CD8-positive, alpha-beta T cell (primary cell): ENCODE measurements at regions of chr2 and their contacts with region 1.

Region 1: GRCh38 chr2:98649135-98649991 is 41.0 kb downstream of the UNC50 start:
- DNase-seq: peak; percentile 73 to 92 (median 83)
- ATAC-seq: peak; percentile 92
- H3K4me3 ChIP-seq: no peak overlapping the region
- H3K4me3 Mint-ChIP-seq: peak overlapping the region; percentile 37
- H3K27ac ChIP-seq: peak overlapping the region in 1 of 2 experiments; percentile 47
- H3K27ac Mint-ChIP-seq: peak overlapping the region; percentile 99
- H3K4me1 ChIP-seq: peaks cover 52% of the 10 kb centered on the region
- H3K4me1 Mint-ChIP-seq: peaks cover 63% of the 10 kb centered on the region
- H3K27me3 ChIP-seq: no peaks in the 10 kb centered on the region
- H3K27me3 Mint-ChIP-seq: no peaks in the 10 kb centered on the region
- CTCF ChIP-seq: peak; percentile 98

Region 2: DNA sequence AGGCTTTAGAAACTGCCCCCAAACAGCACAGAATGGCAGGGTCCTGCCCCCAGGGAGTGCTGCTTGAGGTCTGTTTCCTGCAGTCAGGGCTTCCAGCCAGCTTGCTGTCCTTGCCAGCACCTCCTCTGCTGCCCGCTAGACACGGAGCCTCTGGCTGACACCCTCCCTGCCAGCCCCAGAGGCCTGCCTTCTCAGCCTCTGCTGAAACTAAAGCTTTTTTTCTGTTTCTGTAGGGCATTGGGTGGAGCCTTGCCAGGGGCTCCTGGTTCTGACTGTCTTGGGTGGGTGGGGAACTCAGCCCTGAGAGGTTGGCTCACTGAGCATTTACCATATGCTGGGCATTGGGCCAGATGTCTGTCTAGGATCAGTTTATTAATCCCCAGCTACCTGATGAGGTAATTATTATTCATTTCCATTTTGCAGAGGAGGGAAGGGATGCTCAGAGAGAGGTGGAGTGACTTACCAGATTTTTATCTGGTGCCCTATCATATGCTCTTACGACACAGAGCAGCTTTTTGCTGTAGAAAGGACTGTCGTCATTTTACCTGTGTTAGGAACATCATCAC is 169.3 kb before region 1 on chr2:
- CTCF ChIA-PET with region 1: no interaction called
- POLR2A ChIA-PET with region 1: no interaction called
- intact Hi-C with region 1: no loop called
- DNase-seq: peak in 4 of 9 experiments; percentile 55 to 63 (median 58)
- ATAC-seq: peak; percentile 72
- H3K4me3 ChIP-seq: no peak overlapping the region
- H3K4me3 Mint-ChIP-seq: peak overlapping the region; percentile 53
- H3K27ac ChIP-seq: peak overlapping the region; percentile 29 to 68
- H3K27ac Mint-ChIP-seq: peak overlapping the region; percentile 89
- H3K4me1 ChIP-seq: peaks cover 99% of the 10 kb centered on the region
- H3K4me1 Mint-ChIP-seq: peaks cover 98% of the 10 kb centered on the region
- H3K27me3 ChIP-seq: no peaks in the 10 kb centered on the region
- H3K27me3 Mint-ChIP-seq: no peaks in the 10 kb centered on the region
- CTCF ChIP-seq: no peak

Region 3: DNA sequence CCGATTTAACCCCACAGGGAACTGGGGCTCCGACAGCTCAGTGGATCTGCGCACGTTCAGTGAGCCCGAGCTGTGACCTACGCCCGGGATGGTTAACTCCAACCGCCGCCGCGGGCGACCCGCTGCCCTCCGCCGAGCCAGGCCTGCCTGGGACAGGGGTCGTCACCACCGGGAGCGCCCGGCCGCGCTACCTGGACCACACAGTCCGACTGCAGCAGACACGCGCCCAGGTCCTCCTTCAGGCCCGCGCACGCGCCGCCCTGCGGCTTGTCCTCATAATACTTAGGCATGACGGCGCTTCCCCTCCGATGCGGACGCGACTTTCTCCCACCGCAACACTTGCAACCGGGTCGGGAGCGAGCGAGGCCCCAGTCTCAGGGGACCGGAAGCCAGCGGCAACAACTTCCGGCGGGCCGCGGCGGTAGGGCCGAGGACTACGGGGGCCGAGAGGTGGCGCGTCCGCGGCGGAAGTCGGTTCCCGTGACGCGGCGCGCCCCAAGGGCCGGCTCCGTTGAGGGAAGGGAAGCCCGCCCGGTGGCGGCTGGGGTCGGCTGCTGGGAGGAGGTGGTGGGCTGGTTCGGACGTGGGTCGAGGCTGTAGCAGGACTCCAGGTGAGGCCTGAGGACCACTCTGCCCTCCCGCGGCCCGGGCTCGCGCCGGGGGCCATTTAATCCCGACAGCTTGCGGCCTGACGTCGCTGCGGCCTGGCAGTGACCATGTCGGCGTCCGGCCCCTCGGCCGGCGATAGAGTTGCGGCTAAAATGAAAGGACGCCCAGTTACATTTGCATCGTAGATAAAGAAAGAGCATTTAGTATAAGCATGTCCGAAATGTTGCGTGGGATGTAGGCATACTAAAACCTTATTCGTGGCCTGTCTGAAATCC is 41.0 kb before region 1 on chr2 and contains the starts of genes COA5 and UNC50:
- CTCF ChIA-PET with region 1: no interaction called
- POLR2A ChIA-PET with region 1: no interaction called
- intact Hi-C with region 1: no loop called
- DNase-seq: peak; percentile 84 to 95 (median 89)
- ATAC-seq: peak; percentile 81
- H3K4me3 ChIP-seq: peak within 1 kb of the TSS; percentile 84 to 94
- H3K4me3 Mint-ChIP-seq: peak within 1 kb of the TSS; percentile 89
- H3K27ac ChIP-seq: peak within 1 kb of the TSS; percentile 87 to 95
- H3K27ac Mint-ChIP-seq: peak within 1 kb of the TSS; percentile 95
- H3K4me1 ChIP-seq: peaks cover 48% of the 10 kb centered on the region
- H3K4me1 Mint-ChIP-seq: peaks cover 74% of the 10 kb centered on the region
- H3K27me3 ChIP-seq: no peaks in the 10 kb centered on the region
- H3K27me3 Mint-ChIP-seq: no peaks in the 10 kb centered on the region
- CTCF ChIP-seq: no peak
- total RNA-seq, gene COA5: 19.7 to 24.1 TPM
- total RNA-seq, gene UNC50: 12.5 to 14.4 TPM

Region 4: DNA sequence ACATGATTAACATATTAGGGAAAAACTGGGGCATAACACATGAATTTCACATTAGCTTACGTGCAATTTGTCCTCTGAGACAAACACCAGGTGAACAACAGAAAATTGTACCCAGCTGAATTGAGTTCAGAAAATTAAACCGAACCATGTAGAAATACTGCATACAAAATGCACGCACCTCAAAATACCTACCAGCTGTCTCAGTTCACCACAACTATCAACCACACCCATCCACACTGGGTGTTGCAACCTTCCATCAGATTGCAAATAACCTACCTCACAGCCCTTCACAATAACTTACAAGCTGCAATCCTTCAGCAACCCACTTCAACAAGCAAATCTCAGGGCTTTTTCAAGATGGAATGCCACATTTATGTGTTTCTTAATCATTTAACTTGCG is 15.0 kb after region 1 on chr2:
- CTCF ChIA-PET with region 1: interaction called, 20 read pairs
- POLR2A ChIA-PET with region 1: interaction called, 8 read pairs
- intact Hi-C with region 1: loop called in 1 of 2 experiments (anchors 2 kb)
- DNase-seq: peak; percentile 19 to 86 (median 60)
- ATAC-seq: peak; percentile 68
- H3K4me3 ChIP-seq: peak overlapping the region; percentile 19 to 55
- H3K4me3 Mint-ChIP-seq: peak overlapping the region; percentile 64
- H3K27ac ChIP-seq: peak overlapping the region; percentile 54 to 80
- H3K27ac Mint-ChIP-seq: peak overlapping the region; percentile 95
- H3K4me1 ChIP-seq: peaks cover 64% of the 10 kb centered on the region
- H3K4me1 Mint-ChIP-seq: peaks cover 72% of the 10 kb centered on the region
- H3K27me3 ChIP-seq: no peaks in the 10 kb centered on the region
- H3K27me3 Mint-ChIP-seq: no peaks in the 10 kb centered on the region
- CTCF ChIP-seq: no peak

Region 5: GRCh38 chr2:98702127-98702802 is 52.9 kb after region 1 on chr2:
- CTCF ChIA-PET with region 1: interaction called, 10 read pairs
- POLR2A ChIA-PET with region 1: no interaction called
- intact Hi-C with region 1: loop called in 1 of 2 experiments (anchors 2 kb)
- DNase-seq: no peak
- ATAC-seq: peak; percentile 39
- H3K4me3 ChIP-seq: no peak overlapping the region
- H3K4me3 Mint-ChIP-seq: peak overlapping the region; percentile 64
- H3K27ac ChIP-seq: peak overlapping the region; percentile 11 to 30
- H3K27ac Mint-ChIP-seq: peak overlapping the region; percentile 92
- H3K4me1 ChIP-seq: peaks cover 74% of the 10 kb centered on the region
- H3K4me1 Mint-ChIP-seq: peaks cover 79% of the 10 kb centered on the region
- H3K27me3 ChIP-seq: no peaks in the 10 kb centered on the region
- H3K27me3 Mint-ChIP-seq: no peaks in the 10 kb centered on the region
- CTCF ChIP-seq: no peak

Region 6: GRCh38 chr2:98771721-98772524 is 122.6 kb after region 1 on chr2:
- CTCF ChIA-PET with region 1: interaction called, 12 read pairs
- POLR2A ChIA-PET with region 1: interaction called, 26 read pairs
- intact Hi-C with region 1: loop called (anchors 2 kb)
- DNase-seq: peak; percentile 36 to 93 (median 68)
- ATAC-seq: peak; percentile 68
- H3K4me3 ChIP-seq: peak overlapping the region; percentile 39 to 50
- H3K4me3 Mint-ChIP-seq: peak overlapping the region; percentile 87
- H3K27ac ChIP-seq: peak overlapping the region; percentile 79 to 89
- H3K27ac Mint-ChIP-seq: peak overlapping the region; percentile 98
- H3K4me1 ChIP-seq: peaks cover 67% of the 10 kb centered on the region
- H3K4me1 Mint-ChIP-seq: peaks cover 77% of the 10 kb centered on the region
- H3K27me3 ChIP-seq: no peaks in the 10 kb centered on the region
- H3K27me3 Mint-ChIP-seq: no peaks in the 10 kb centered on the region
- CTCF ChIP-seq: no peak

Region 7: DNA sequence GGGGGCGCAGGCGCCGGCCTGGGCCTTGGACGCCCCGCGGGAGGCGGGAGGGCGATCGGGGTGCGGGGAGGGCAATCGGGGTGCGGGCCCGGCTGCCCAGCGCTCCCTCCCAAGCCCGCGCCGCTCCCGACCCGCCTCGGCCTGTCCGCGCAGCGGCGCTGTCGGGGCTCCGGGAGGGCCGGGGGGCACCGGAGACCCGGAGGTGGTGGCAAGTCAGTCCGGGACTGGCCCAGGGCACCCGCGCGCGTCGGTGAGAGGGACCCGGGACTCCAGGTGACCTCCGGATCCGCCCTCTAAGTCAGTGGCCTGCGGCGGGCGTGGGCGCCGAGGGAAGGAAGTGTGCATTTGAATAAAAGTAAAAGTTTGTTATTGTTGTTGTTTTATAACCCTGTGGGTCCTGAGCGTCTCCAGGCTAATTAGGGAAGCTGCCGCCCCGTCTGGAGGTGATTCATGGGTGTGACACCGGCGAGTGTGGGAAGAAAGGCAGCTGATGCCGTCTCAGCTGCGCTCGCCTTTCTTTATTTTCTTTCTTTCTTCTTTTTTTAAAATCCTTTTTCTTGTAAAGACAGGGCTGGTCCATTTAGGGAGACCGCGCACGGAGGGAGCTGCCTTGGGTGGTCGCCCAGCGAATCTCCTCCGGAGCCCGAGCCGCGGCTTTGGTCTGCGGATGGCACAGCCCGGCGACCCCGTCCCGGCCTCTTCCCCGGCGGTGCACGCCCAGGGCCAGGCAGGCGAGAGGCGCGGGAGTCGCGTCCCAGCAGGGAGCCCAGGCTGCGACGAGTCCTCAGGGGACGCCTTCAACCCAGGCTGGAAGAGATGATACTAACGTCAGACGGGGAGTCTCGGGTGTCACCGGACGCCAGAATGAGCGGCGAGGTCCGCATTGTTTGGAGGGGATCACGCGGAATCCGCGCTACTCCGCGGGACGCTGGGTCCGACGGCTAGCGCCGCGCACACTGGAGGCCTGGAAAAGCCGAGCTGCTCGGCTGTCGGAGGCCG is 287.3 kb after region 1 on chr2:
- CTCF ChIA-PET with region 1: no interaction called
- POLR2A ChIA-PET with region 1: no interaction called
- intact Hi-C with region 1: loop called in 1 of 2 experiments (anchors 10 kb)
- DNase-seq: peak in 1 of 9 experiments; percentile 22
- ATAC-seq: peak; percentile 38
- H3K4me3 ChIP-seq: peak overlapping the region; percentile 12 to 34
- H3K4me3 Mint-ChIP-seq: peak overlapping the region; percentile 81
- H3K27ac ChIP-seq: no peak overlapping the region
- H3K27ac Mint-ChIP-seq: no peak overlapping the region
- H3K4me1 ChIP-seq: peaks cover 9% of the 10 kb centered on the region
- H3K4me1 Mint-ChIP-seq: peaks cover 13% of the 10 kb centered on the region
- H3K27me3 ChIP-seq: peaks cover 3 to 9% of the 10 kb centered on the region in 2 experiments
- H3K27me3 Mint-ChIP-seq: peaks cover 52% of the 10 kb centered on the region
- CTCF ChIP-seq: no peak

Region 8: GRCh38 chr2:99141110-99142108 is 492.0 kb after region 1 on chr2 and contains the start of gene C2orf15:
- CTCF ChIA-PET with region 1: interaction called, 3 read pairs
- POLR2A ChIA-PET with region 1: no interaction called
- intact Hi-C with region 1: loop called in 1 of 2 experiments (anchors 5 kb)
- DNase-seq: peak; percentile 91 to 98 (median 97)
- ATAC-seq: peak; percentile 88
- H3K4me3 ChIP-seq: peak within 1 kb of the TSS; percentile 86 to 97
- H3K4me3 Mint-ChIP-seq: peak within 1 kb of the TSS; percentile 88
- H3K27ac ChIP-seq: peak within 1 kb of the TSS; percentile 90 to 91
- H3K27ac Mint-ChIP-seq: peak within 1 kb of the TSS; percentile 96
- H3K4me1 ChIP-seq: peaks cover 14% of the 10 kb centered on the region
- H3K4me1 Mint-ChIP-seq: peaks cover 25% of the 10 kb centered on the region
- H3K27me3 ChIP-seq: no peaks in the 10 kb centered on the region
- H3K27me3 Mint-ChIP-seq: no peaks in the 10 kb centered on the region
- CTCF ChIP-seq: no peak
- total RNA-seq, gene C2orf15: 1.3 to 1.8 TPM